ENCODE measurements at regions of chr12 and their contacts with region 1.

Region 1: GRCh38 chr12:52903285-52903854 is 1.5 kb downstream of the KRT8 start:
- DNase-seq: peak; percentile 69
- ATAC-seq: peak; percentile 71
- H3K4me3 ChIP-seq: peak overlapping the region; percentile 87 to 97 (median 95)
- H3K27ac ChIP-seq: peak overlapping the region; percentile 71
- H3K4me1 ChIP-seq: peaks cover 73% of the 10 kb centered on the region
- H3K27me3 ChIP-seq: no peaks in the 10 kb centered on the region; a peak in 1 of 5 replicates
- CTCF ChIP-seq: no peak
- EP300 ChIP-seq: no peak
- POLR2A ChIP-seq: peak in 1 of 2 experiments; percentile 1; a peak in 3 of 4 replicates
- RAD21 ChIP-seq: peak; percentile 46; the same call in 1 of the 2 replicates

Region 2: GRCh38 chr12:52774629-52775250 is 128.6 kb before region 1 on chr12:
- CTCF ChIA-PET with region 1: no interaction called
- POLR2A ChIA-PET with region 1: no interaction called
- in situ Hi-C with region 1: no loop called
- intact Hi-C with region 1: no loop called
- DNase-seq: no peak
- ATAC-seq: no peak
- H3K4me3 ChIP-seq: no peak overlapping the region
- H3K27ac ChIP-seq: no peak overlapping the region
- H3K4me1 ChIP-seq: no peaks in the 10 kb centered on the region
- H3K27me3 ChIP-seq: peaks cover 0 to 26% of the 10 kb centered on the region in 2 experiments; a peak in 4 of 5 replicates
- CTCF ChIP-seq: no peak
- EP300 ChIP-seq: no peak
- POLR2A ChIP-seq: no peak
- RAD21 ChIP-seq: no peak

Region 3: DNA sequence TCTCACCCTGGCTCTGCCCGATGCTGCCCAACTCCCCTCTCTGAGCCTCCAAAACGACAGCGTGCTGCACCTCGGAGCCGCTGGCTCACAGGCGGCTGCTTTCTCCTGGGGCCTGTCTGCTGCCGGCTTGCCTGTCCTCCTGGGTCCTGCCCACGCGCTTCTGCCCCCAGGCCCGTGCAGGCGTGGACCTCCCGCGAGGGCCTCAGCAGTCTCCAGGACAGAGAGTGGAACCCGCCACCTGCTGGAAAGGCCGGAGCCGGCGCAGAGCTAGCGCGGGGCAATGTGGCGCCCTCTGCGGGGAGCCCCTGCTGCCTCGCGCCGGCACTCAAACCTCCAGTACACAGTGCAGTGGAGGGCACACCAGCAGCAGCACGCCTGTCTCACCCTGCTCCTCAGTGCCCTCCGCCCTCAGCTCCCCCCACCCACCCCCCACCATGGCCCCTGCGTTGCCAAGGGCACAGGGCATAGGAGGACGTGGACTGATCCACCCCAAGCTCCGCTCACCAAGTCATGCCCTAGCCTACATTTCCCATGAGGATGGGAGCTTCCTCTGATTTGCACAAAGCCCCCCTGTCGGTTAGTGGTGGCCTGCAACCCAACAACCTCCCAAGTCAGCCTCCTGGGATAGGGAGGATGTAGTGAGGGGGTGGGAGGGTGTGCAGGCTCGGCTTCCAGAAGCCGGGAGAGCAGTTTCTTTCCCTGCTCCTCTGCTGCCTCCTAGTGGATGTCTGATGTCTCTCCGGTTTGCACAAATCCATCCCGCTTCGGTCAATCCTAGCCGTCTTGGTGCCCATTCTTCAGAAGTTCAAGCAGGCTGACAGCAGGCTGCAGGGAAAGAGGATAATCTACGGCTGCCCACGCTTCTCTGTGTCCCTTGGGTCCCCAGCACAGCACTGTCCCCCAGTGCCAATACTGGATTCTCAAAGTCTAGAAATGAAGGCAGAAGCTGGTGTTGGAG is 23.7 kb before region 1 on chr12:
- CTCF ChIA-PET with region 1: interaction called, 8 read pairs
- POLR2A ChIA-PET with region 1: interaction called, 40 read pairs
- in situ Hi-C with region 1: no loop called
- intact Hi-C with region 1: loop called (anchors 1 kb)
- DNase-seq: peak; percentile 83
- ATAC-seq: peak; percentile 90
- H3K4me3 ChIP-seq: peak overlapping the region; percentile 49 to 71 (median 51)
- H3K27ac ChIP-seq: no peak overlapping the region
- H3K4me1 ChIP-seq: peaks cover 56% of the 10 kb centered on the region
- H3K27me3 ChIP-seq: peaks cover 1 to 8% of the 10 kb centered on the region in 2 experiments; a peak in 2 of 5 replicates
- CTCF ChIP-seq: peak; percentile 92
- EP300 ChIP-seq: no peak
- POLR2A ChIP-seq: no peak
- RAD21 ChIP-seq: peak; percentile 77

Region 4: GRCh38 chr12:52924764-52925716 is 21.7 kb after region 1 on chr12:
- CTCF ChIA-PET with region 1: interaction called, 39 read pairs
- POLR2A ChIA-PET with region 1: interaction called, 465 read pairs
- in situ Hi-C with region 1: no loop called
- intact Hi-C with region 1: loop called (anchors 1 kb)
- DNase-seq: peak; percentile 76
- ATAC-seq: peak; percentile 38
- H3K4me3 ChIP-seq: peak overlapping the region; percentile 38 to 60 (median 43); a peak in 5 of 6 replicates
- H3K27ac ChIP-seq: peak overlapping the region; percentile 99
- H3K4me1 ChIP-seq: peaks cover 84% of the 10 kb centered on the region
- H3K27me3 ChIP-seq: no peaks in the 10 kb centered on the region
- CTCF ChIP-seq: no peak
- EP300 ChIP-seq: no peak; a peak in 1 of 4 replicates
- POLR2A ChIP-seq: no peak
- RAD21 ChIP-seq: no peak

Region 5: GRCh38 chr12:52949413-52950331 is 46.3 kb after region 1 on chr12:
- CTCF ChIA-PET with region 1: interaction called, 3 read pairs
- POLR2A ChIA-PET with region 1: interaction called, 437 read pairs
- in situ Hi-C with region 1: no loop called
- intact Hi-C with region 1: loop called (anchors 2 kb)
- DNase-seq: peak; percentile 98
- ATAC-seq: peak; percentile 83
- H3K4me3 ChIP-seq: peak overlapping the region; percentile 88 to 100 (median 99)
- H3K27ac ChIP-seq: peak overlapping the region; percentile 100
- H3K4me1 ChIP-seq: peaks cover 68% of the 10 kb centered on the region
- H3K27me3 ChIP-seq: peaks cover 0 to 2% of the 10 kb centered on the region in 2 experiments; a peak in 1 of 5 replicates
- CTCF ChIP-seq: peak; percentile 42; the same call in 1 of the 2 replicates
- EP300 ChIP-seq: peak in 1 of 2 experiments; percentile 90; a peak in 2 of 4 replicates
- POLR2A ChIP-seq: peak; percentile 82 to 96
- RAD21 ChIP-seq: peak; percentile 81

Region 6: DNA sequence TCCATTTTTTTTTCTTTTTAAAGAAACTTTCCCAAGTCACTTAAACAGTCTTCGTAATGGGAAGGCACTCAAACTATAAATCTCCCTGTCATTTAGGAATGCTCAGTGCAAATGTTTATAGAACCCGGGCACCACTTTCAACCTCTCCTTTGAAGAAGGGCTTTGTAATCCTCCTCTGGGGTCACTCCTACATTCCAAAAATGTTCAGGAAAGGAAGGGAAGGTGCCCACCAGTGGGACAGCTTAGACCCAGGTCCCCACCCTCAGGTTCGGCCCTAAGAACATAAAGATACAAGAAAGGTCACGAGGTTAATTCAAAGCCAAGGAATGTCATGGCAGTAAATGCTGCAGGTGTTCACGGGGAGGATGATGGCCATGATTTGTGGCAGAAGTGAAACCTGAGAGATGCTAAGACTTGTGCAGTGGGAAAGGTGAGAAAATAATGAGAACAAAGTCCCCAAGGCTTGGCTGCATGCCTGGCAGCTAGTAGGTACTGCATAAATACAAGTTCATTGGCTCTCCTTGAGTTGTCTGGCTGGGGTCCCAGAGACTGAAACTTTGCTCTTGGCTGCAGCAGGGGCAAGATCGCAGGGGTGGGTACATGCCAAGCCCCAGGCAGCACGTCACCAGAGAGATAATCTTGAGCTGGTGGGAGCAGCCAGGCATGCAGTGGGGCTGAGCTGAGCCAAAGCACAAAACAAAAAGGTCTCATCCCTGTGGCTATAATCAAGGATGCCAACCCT is 66.6 kb after region 1 on chr12:
- CTCF ChIA-PET with region 1: interaction called, 14 read pairs
- POLR2A ChIA-PET with region 1: interaction called, 18 read pairs
- in situ Hi-C with region 1: no loop called
- intact Hi-C with region 1: no loop called
- DNase-seq: peak; percentile 82
- ATAC-seq: peak; percentile 57
- H3K4me3 ChIP-seq: peak overlapping the region in 1 of 3 experiments; percentile 44; a peak in 2 of 6 replicates
- H3K27ac ChIP-seq: no peak overlapping the region
- H3K4me1 ChIP-seq: peaks cover 62% of the 10 kb centered on the region
- H3K27me3 ChIP-seq: no peaks in the 10 kb centered on the region
- CTCF ChIP-seq: no peak
- EP300 ChIP-seq: peak in 1 of 2 experiments; percentile 68; a peak in 2 of 4 replicates
- POLR2A ChIP-seq: no peak
- RAD21 ChIP-seq: no peak

Region 7: GRCh38 chr12:53005986-53006809 is 102.8 kb after region 1 on chr12 and contains the start of gene EIF4B:
- CTCF ChIA-PET with region 1: no interaction called
- POLR2A ChIA-PET with region 1: interaction called, 23 read pairs
- in situ Hi-C with region 1: no loop called
- intact Hi-C with region 1: no loop called
- DNase-seq: peak; percentile 97
- ATAC-seq: peak; percentile 96
- H3K4me3 ChIP-seq: peak within 1 kb of the TSS; percentile 89 to 93 (median 92)
- H3K27ac ChIP-seq: peak within 1 kb of the TSS; percentile 99
- H3K4me1 ChIP-seq: peaks cover 47% of the 10 kb centered on the region
- H3K27me3 ChIP-seq: no peaks in the 10 kb centered on the region; a peak in 1 of 5 replicates
- CTCF ChIP-seq: peak; percentile 22; the same call in 1 of the 2 replicates
- EP300 ChIP-seq: no peak; a peak in 2 of 4 replicates
- POLR2A ChIP-seq: peak; percentile 52 to 70; a peak in 3 of 4 replicates
- RAD21 ChIP-seq: no peak
- total RNA-seq, gene EIF4B: 548 and 779 TPM in 2 replicates